GM10248 (cell line): ENCODE measurements at regions of chr3 and their contacts with region 1.

Region 1: GRCh38 chr3:16300881-16301359 is 35.9 kb downstream of the OXNAD1 start:
- DNase-seq: no peak
- CTCF ChIP-seq: no peak

Region 2: DNA sequence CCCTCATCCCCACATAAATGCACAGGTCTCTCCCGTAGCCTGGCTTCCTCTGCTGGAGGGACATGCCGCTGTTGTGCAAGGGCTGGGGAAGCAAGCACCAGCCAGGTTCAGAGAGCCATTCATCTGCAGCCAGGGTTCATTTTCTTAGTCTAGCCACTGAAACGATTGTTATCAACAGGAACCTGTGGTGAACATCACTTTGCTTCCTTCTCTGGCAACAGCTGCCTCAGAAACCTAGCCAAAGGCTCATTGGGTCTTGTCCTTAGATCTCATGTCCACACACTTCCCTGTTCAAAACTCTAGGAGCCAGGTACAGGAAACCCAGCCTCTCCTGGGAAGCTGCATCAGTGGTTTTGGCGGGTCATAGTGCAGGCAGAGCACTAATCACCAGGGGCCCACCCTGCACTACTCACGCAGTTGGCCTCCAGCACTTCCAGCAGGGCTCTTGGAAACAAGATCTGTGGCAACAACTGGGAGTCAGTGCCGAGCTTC is 11.1 kb after region 1 on chr3:
- CTCF ChIA-PET with region 1: interaction called, 27 read pairs
- POLR2A ChIA-PET with region 1: interaction called, 3 read pairs
- DNase-seq: no peak
- CTCF ChIP-seq: no peak